ENCODE measurements at regions of chr10 and their contacts with region 1.

Region 1: DNA sequence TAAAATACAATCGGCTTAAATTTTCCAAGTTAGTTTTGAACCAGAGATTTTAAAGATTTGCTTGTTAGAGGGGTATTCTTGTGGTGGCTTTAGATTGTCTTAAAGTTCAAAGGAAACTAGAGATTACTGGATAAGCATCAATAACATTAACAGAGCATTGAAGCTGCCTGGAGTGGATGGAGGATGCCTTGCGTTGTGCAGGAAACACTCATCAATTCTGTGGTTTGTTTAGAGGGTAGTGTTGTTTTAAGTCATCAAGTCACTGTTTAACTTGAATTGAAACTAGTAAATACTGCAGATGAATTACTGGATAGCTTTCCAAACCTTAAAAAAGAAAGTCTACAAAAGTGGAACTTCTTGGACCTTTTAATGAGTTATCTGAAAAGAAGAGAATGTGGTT is 218.6 kb downstream of the CELF2 start:
- DNase-seq: peak in 5 of 14 experiments; percentile 23 to 71 (median 61)
- ATAC-seq: peak; percentile 76
- H3K4me3 ChIP-seq: no peak overlapping the region
- H3K4me3 Mint-ChIP-seq: peak overlapping the region; percentile 51
- H3K27ac ChIP-seq: peak overlapping the region; percentile 43 to 47
- H3K27ac Mint-ChIP-seq: no peak overlapping the region
- H3K4me1 ChIP-seq: peaks cover 63% of the 10 kb centered on the region
- H3K4me1 Mint-ChIP-seq: peaks cover 68% of the 10 kb centered on the region
- H3K27me3 ChIP-seq: no peaks in the 10 kb centered on the region
- H3K27me3 Mint-ChIP-seq: no peaks in the 10 kb centered on the region
- CTCF ChIP-seq: no peak

Region 2: DNA sequence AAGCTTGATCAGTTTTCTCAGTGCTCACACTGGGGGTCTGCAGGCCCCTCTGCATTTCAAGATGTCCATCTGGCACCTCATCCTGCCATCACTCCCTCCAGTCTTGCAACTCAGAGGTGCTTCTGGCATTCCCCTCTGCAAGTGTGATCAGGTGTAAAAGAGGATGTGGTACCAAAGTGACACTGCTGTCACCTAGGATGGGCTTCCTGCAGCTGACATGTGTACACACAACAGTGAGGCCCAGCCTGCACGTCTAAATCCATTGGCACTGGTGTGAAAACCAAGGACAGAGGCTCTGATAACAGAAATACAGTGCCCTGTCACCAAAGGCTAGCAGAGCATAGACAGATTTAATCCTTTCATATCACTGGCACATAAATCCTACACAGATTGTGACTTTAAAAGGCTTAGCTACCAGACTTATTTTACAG is 381.1 kb before region 1 on chr10:
- CTCF ChIA-PET with region 1: no interaction called
- POLR2A ChIA-PET with region 1: no interaction called
- intact Hi-C with region 1: no loop called
- DNase-seq: peak in 2 of 14 experiments; percentile 1 to 5
- ATAC-seq: no peak
- H3K4me3 ChIP-seq: no peak overlapping the region
- H3K4me3 Mint-ChIP-seq: no peak overlapping the region
- H3K27ac ChIP-seq: no peak overlapping the region
- H3K27ac Mint-ChIP-seq: no peak overlapping the region
- H3K4me1 ChIP-seq: peaks cover 3% of the 10 kb centered on the region
- H3K4me1 Mint-ChIP-seq: no peaks in the 10 kb centered on the region
- H3K27me3 ChIP-seq: peaks cover 0 to 7% of the 10 kb centered on the region in 2 experiments
- H3K27me3 Mint-ChIP-seq: peaks cover 14% of the 10 kb centered on the region
- CTCF ChIP-seq: no peak

Region 3: DNA sequence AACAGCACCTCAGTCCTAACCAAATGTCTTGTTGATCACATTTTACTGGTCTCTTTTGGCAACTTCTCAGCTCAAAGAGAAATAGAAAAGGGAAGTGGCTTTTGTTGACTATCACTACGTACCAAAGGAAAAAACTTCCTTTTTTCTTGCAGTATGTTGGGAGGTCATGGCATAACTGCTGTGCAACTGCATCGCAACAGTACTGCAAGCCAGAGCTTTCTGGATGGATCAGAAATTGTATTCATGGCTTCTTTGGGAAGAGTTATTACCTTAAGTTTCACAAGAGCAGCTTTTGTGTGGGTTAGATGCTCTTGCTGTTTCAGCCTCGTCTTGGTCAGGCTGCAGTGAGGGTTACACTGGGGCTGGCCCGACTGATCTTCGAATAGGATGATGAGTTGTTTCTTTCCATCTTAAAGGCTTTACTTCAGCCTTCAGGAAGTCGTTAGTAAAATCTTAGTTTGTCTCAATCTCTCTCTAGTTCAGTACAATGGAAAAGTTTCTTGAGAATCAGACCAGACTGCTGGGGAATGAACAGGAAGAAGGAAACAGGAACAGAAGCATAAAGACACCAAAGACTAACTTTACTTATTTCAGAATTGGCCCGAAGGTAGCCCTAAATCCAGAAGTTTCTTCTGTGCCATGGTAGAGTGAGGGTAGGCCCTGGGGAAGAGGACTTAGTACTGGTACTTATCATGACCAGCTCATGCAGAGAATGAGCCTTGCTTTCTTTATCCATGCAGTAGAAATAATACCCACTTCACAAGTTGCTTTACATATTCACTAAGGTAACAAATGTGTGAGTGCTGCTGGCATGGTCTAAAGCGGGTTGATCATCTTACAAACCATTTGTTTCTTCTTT is 65.0 kb before region 1 on chr10:
- CTCF ChIA-PET with region 1: interaction called, 3 read pairs
- POLR2A ChIA-PET with region 1: interaction called, 10 read pairs
- intact Hi-C with region 1: no loop called
- DNase-seq: peak in 2 of 14 experiments; percentile 45 to 64
- ATAC-seq: no peak
- H3K4me3 ChIP-seq: peak overlapping the region; percentile 87
- H3K4me3 Mint-ChIP-seq: no peak overlapping the region
- H3K27ac ChIP-seq: peak overlapping the region; percentile 84 to 96
- H3K27ac Mint-ChIP-seq: no peak overlapping the region
- H3K4me1 ChIP-seq: peaks cover 68% of the 10 kb centered on the region
- H3K4me1 Mint-ChIP-seq: peaks cover 2% of the 10 kb centered on the region
- H3K27me3 ChIP-seq: no peaks in the 10 kb centered on the region
- H3K27me3 Mint-ChIP-seq: no peaks in the 10 kb centered on the region
- CTCF ChIP-seq: no peak

Region 4: DNA sequence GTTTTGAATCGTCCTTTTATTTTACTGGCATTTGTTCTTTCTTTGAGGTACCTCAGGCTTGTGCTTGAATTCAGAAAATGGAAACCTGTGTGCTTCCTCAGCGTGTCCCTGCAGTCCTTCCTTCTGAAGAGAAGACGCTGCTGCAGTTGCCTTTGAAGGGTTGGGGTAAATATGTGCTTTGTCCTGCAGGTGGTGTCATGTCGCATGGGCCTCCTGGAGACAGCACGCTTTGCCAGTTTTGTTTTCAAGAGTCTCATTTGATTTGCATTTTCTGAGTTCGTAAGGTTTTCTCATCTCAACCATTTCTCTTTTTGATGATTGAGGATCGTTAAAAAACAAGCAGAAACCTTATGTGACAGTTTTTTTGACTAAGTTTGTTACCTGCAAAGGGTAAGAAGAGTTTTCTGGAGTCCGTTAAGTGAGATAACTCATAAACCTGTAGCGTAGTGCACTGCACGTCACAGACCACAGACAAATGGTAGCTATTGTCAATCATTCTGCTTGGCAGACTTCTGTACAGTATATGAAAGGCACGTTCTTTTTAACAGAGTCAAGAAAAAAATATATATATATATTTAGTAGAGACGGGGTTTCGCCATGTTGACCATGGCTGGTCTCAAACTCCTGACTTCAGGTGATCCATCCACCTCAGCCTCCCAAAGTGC is 1016.8 kb after region 1 on chr10:
- CTCF ChIA-PET with region 1: no interaction called
- POLR2A ChIA-PET with region 1: no interaction called
- intact Hi-C with region 1: no loop called
- DNase-seq: peak in 2 of 14 experiments; percentile 27 to 32
- ATAC-seq: no peak
- H3K4me3 ChIP-seq: no peak overlapping the region
- H3K4me3 Mint-ChIP-seq: no peak overlapping the region
- H3K27ac ChIP-seq: no peak overlapping the region
- H3K27ac Mint-ChIP-seq: no peak overlapping the region
- H3K4me1 ChIP-seq: no peaks in the 10 kb centered on the region
- H3K4me1 Mint-ChIP-seq: no peaks in the 10 kb centered on the region
- H3K27me3 ChIP-seq: no peaks in the 10 kb centered on the region
- H3K27me3 Mint-ChIP-seq: no peaks in the 10 kb centered on the region
- CTCF ChIP-seq: no peak